Motor neuron (in vitro differentiated cells): ENCODE measurements at regions of chr1 and their contacts with region 1.

Region 1: DNA sequence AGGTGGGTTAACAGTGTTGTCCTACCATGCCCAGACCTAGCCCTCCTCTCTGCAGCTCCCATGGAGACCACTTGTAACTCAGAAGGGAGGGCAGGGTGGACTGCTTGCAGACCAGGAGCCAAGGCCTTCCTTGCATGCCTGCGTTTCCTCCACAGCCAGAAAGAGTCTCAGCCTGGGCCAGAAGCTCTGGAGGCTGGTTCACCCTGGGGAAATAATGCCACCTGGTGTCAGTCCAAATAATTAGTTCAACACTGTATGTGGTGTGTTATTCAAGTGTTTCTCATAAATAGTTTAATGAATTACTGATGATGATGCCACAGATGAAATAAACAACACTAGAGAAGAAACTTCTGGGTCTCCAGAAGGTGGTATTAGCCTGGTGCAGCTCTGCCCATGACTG is 16.9 kb upstream of the VANGL1 start:
- ATAC-seq: no peak
- H3K4me3 ChIP-seq: no peak overlapping the region
- H3K27ac ChIP-seq: no peak overlapping the region
- H3K4me1 ChIP-seq: no peaks in the 10 kb centered on the region

Region 2: DNA sequence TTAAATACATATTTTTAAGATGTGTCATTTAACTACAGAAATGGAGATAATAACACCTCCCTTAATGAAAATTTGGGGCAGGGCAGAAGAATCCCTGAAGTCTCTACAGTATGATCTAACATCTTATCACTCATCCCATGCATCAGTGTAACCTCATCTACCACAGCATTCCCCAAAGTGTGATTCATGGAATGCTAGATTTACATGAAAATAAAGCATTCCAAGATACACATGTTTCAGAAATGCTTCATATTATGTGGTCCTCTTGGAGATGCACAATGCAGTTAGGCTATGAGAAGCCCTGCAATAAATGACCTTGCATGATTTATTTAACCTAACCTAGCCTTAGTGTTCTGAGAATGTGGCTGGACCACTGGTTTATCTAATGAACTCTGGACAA is 1304.3 kb before region 1 on chr1:
- in situ Hi-C with region 1: no loop called
- ATAC-seq: peak in 2 of 8 experiments; percentile 89 to 95
- H3K4me3 ChIP-seq: no peak overlapping the region
- H3K27ac ChIP-seq: no peak overlapping the region
- H3K4me1 ChIP-seq: no peaks in the 10 kb centered on the region

Region 3: DNA sequence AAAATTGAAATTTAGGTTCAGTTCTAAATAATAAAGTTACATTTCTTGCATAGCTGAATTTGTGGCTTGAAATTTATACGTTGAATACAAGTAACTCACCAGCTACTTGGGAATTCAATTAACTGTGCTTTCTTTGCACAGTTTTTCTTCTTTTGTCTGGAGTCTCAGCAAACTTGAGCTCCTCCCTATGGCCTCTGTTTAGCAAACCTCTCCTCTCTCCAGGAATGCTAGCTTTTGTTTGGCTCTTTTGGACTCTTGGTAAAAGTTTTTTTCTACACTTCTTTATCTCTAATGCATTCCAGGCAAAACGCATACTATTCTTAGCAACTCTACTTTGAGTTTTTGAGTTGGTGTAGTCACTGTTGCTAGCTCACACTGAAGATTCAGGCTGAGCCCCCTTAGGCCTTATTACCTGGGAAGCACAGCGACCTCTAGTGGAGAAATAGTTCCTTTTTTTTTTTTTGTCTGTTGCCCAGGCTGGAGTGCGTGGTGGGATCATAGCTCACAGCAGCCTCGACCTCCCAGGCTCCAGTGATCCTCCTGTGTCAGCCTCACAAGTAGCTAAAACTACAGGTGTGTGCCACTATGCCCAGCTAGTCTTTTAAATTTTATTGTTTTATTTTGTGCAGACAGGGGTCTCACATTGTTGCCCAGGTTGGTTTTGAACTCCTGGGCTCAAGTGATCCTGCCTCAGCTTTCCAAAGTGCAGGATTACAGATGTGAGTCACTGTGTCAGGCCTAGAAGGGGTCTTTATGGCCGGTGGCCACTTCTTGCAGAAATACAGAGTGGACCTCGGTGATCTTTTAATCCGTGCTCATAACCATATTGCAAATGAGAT is 81.9 kb after region 1 on chr1:
- in situ Hi-C with region 1: loop called in 1 of 9 experiments (anchors 25 kb)
- ATAC-seq: peak; percentile 24 to 83 (median 62)
- H3K4me3 ChIP-seq: no peak overlapping the region
- H3K27ac ChIP-seq: no peak overlapping the region
- H3K4me1 ChIP-seq: peaks cover 9 to 16% of the 10 kb centered on the region in 2 donors

Region 4: GRCh38 chr1:115976062-115976920 is 351.4 kb after region 1 on chr1 and contains the start of gene SLC22A15:
- in situ Hi-C with region 1: loop called in 1 of 9 experiments (anchors 25 kb)
- ATAC-seq: peak; percentile 72 to 90 (median 85)
- H3K4me3 ChIP-seq: peak within 1 kb of the TSS; percentile 38 to 58 (median 45)
- H3K27ac ChIP-seq: peak within 1 kb of the TSS; percentile 25 to 75
- H3K4me1 ChIP-seq: peaks cover 9 to 27% of the 10 kb centered on the region in 2 donors
- total RNA-seq, gene SLC22A15: 0.20 to 11.2 (median 7.0) TPM

Region 5: GRCh38 chr1:116033322-116033721 is 408.5 kb after region 1 on chr1:
- in situ Hi-C with region 1: no loop called
- ATAC-seq: peak; percentile 19 to 100 (median 99)
- H3K4me3 ChIP-seq: no peak overlapping the region
- H3K27ac ChIP-seq: no peak overlapping the region
- H3K4me1 ChIP-seq: peaks cover 21 to 27% of the 10 kb centered on the region in 2 donors